Right ventricle myocardium inferior (tissue), 1 donor: ENCODE measurements at regions of chr12 and their contacts with region 1.

Region 1: DNA sequence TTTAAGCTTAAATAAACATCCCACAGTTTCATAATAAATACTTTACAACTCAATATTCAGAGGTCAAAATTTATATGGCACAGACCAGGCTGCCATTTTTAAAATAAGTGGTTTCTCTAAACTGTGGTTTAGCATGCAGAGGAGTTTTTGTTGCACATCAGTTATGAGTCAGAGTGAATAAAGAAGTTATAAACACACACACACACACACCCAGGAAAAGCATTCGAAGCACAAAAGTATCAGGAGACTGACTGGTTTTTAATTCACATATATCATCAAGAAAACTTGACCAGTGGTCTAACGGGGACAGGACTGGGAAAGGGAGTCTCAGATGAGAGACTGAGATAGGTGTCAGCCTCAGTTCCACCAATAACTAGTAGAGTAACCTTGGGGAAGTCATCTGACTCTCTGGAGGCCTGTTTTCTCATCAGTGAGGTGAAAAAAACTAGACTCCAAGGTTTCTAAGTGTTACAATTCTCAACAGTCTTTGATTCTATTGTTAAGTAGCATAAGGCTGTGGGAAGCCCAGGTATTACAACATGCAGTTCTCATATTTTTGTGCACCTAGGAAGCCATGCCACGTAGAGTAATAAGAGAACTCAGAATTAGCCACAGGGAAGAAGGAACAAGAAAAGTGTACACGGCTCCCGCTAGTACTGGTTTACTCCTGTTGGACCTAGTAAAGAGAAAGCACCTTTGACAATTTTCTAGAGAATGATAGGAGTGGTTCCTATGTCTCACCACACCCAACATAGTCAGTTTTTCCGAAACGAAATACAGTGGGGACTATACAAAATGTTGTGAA is 5.2 kb downstream of the PPTC7 start:
- DNase-seq: no peak
- ATAC-seq: no peak

Region 2: DNA sequence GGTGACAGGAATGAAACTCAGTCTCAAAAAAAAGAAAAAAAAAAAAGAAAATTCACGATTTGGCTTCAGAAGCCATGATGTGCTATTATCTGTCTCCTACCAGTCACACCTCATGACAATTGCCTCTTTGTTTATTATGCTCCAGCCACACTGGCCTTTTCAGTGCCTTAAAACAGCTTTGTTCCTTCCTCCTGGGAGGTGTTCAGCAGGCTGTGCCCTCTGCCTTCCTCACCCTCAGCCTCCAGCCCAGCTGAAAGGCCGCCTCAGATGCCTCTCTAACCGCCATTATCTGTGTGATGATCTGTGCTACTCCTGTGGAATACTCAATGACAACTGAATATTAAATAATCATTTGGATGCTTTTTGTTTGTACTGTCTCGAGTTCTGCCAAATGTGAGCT is 119.2 kb before region 1 on chr12:
- intact Hi-C with region 1: no loop called
- DNase-seq: no peak
- ATAC-seq: no peak

Region 3: DNA sequence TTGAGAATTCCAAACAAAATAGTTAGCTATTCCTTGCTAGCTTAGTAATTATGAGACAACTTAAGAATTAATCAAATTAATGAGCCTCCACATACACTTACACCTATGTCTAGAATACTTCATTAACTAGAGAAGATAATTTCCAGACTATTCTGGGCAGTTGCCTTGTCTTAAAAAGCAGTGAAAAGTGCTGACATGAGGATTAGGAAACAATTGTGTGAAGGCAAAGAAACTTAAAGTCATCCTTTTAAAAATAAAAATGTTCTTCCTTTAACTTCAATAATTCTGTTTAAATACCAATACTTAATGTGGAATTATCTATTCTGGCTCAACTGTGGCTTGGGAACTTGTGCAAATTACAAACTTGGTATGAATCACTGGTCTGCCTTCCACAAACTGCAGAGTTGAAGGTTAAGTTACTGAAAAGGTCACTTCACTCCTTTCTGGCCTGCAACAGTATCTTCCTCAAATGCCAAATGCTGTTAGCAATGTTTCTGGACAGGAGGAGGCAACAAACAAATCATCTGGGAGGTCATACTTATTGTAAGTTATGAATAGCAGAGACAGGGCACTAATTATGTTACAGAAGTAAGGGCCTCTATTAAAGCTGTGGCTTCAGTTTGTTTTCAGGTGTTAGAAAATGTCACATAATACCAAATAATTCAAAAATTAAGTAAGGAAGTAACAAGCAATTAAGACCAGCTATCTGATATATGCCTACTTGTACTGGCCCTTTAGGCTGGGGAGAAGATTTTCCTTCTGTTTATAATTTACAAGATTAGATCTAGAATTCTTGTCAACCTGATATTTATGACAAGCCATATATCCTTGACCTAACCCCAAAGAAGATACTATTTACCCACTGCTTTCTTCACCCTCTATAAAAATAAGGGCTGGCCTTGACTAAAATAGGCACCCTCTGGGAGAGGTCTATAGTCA is 13.9 kb before region 1 on chr12:
- intact Hi-C with region 1: loop called (anchors 2 kb)
- DNase-seq: no peak
- ATAC-seq: peak; percentile 42